PC-3 (cell line): ENCODE measurements at regions of chr13 and their contacts with region 1.

Region 1: DNA sequence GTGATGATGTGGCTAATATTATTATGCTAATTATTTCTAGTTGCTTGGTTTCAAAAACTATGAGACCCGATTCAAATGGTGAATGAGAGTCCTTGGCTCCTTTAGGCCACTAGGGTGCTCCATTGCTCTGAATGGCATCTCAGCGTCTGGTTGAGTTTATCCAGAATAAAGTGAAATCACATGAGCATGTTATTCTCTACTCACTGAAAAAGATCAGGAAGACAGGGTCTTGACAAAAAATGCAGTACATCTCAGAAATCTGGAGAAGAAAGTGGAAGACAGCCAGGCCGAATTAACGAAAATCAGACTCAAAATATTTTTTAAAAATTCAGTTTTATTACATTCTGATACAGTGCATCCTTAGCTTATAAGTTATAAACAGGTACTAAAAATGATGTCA is 516.2 kb downstream of the MYO16 start:
- DNase-seq: peak; percentile 74
- ATAC-seq: peak; percentile 73
- H3K4me3 ChIP-seq: no peak overlapping the region
- H3K27ac ChIP-seq: 0 out of 2 replicates have a peak overlapping the region, but pooled peaks have one; percentile 6
- H3K4me1 ChIP-seq: peaks cover 39% of the 10 kb centered on the region
- H3K27me3 ChIP-seq: no peaks in the 10 kb centered on the region
- CTCF ChIP-seq: peak; percentile 87

Region 2: GRCh38 chr13:108961542-108962125 is 184.0 kb before region 1 on chr13:
- CTCF ChIA-PET with region 1: interaction called, 4 read pairs
- POLR2A ChIA-PET with region 1: no interaction called
- intact Hi-C with region 1: loop called (anchors 5 kb)
- DNase-seq: peak; percentile 67
- ATAC-seq: peak; percentile 48
- H3K4me3 ChIP-seq: no peak overlapping the region
- H3K27ac ChIP-seq: no peak overlapping the region
- H3K4me1 ChIP-seq: 0 out of 2 replicates have a peak, but pooled peaks cover 6% of the 10 kb centered on the region
- H3K27me3 ChIP-seq: no peaks in the 10 kb centered on the region
- CTCF ChIP-seq: peak; percentile 83

Region 3: GRCh38 chr13:109275852-109276251 is 130.2 kb after region 1 on chr13:
- CTCF ChIA-PET with region 1: no interaction called
- POLR2A ChIA-PET with region 1: no interaction called
- intact Hi-C with region 1: loop called (anchors 5 kb)
- DNase-seq: no peak
- ATAC-seq: 0 out of 2 replicates have a peak, but pooled peaks have one; percentile 6
- H3K4me3 ChIP-seq: no peak overlapping the region
- H3K27ac ChIP-seq: no peak overlapping the region
- H3K4me1 ChIP-seq: peaks cover 34% of the 10 kb centered on the region
- H3K27me3 ChIP-seq: no peaks in the 10 kb centered on the region
- CTCF ChIP-seq: peak; percentile 35; the same call in 1 of the 2 replicates

Region 4: DNA sequence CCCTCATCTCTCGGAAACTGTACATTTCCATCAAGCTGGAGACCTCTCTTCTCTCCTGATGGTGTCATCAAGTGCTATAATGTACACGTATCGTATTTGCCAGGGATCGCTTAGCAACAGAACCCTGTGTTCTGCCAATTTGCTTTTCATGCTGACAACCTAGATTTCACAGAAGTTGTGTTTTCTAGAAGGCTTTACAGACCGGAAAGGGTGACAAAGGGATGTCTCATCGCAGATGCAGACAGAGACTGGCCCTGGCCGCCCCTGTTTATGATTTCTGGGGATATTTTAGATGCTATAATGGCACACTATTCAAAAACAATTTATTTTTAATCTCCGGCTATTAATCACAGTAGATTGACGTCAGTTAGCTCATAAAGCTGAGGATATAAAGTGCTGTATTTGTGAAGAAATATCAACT is 349.3 kb after region 1 on chr13:
- CTCF ChIA-PET with region 1: no interaction called
- POLR2A ChIA-PET with region 1: no interaction called
- intact Hi-C with region 1: loop called (anchors 5 kb)
- DNase-seq: peak; percentile 74
- ATAC-seq: peak; percentile 86
- H3K4me3 ChIP-seq: peak overlapping the region; percentile 48
- H3K27ac ChIP-seq: peak overlapping the region; percentile 89
- H3K4me1 ChIP-seq: peaks cover 38% of the 10 kb centered on the region
- H3K27me3 ChIP-seq: no peaks in the 10 kb centered on the region
- CTCF ChIP-seq: no peak

Region 5: GRCh38 chr13:109720758-109721184 is 575.1 kb after region 1 on chr13:
- CTCF ChIA-PET with region 1: no interaction called
- POLR2A ChIA-PET with region 1: no interaction called
- intact Hi-C with region 1: no loop called
- DNase-seq: no peak
- ATAC-seq: no peak
- H3K4me3 ChIP-seq: no peak overlapping the region
- H3K27ac ChIP-seq: no peak overlapping the region
- H3K4me1 ChIP-seq: no peaks in the 10 kb centered on the region
- H3K27me3 ChIP-seq: no peaks in the 10 kb centered on the region
- CTCF ChIP-seq: no peak

Region 6: DNA sequence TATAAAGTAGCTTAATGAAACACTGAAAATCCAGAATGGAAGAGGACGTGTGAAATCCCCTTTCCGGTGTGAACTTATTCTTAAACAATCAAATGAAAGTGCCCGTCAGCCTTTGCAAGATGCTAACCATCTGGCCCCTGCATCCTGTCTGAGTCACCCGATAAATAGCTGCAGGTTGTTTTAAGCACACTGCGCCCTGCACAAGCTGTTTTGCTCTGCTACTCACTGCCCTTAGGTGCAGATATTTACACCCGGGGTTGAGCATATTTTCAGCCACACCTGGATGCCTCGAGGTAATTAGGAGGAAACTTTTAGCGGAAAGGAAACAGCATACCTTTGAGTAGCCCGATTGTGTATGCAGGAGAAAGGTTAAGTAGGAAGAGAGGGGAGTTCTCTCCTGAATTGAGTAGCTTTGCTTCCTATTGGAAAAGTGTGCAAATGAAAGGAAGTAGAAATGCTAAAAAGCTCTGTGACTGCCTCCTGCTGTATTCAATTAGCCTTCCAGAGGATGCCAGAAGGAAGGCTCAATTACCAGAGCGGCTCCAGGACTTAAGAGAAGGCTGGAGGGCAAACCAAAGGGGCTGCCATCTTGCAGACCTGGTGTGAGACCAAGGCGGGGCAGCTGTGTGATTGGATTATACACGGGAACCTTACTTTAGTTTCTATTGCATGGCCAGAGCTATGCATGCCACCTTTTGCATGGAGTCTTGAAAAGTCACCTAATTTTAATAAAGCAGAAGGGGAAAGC is 598.2 kb after region 1 on chr13:
- CTCF ChIA-PET with region 1: no interaction called
- POLR2A ChIA-PET with region 1: no interaction called
- intact Hi-C with region 1: loop called (anchors 5 kb)
- DNase-seq: peak; percentile 87
- ATAC-seq: peak; percentile 94
- H3K4me3 ChIP-seq: peak overlapping the region; percentile 25; the same call in 1 of the 2 replicates
- H3K27ac ChIP-seq: peak overlapping the region; percentile 47
- H3K4me1 ChIP-seq: peaks cover 21% of the 10 kb centered on the region
- H3K27me3 ChIP-seq: no peaks in the 10 kb centered on the region
- CTCF ChIP-seq: no peak

Region 7: DNA sequence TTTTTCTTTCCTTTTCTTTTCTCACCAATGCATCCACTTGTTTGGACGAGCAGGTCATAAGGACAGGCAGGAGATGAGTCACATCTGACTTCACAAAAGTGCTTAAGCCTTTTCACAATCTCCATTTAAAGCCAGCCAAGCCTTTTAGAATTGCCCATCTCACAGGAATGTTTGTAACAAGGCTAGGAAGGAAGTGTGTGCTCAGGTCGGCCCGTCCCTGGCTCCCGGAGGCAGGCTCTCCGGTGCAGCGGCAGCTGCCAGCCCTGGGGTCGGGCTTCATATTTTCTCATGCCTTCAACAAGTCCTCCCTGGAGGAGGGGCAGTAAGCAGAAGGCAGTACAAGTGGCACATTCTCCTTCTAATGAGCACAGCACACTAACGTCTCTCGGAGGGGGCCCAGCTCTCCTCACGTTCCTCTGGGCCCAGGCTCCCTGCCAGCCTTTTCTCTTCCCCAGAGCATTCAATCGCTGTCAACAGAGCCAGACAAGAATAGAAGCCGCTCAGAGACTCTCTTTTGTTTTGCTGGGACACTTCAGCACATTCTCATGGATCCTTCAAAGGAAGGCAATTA is 980.8 kb after region 1 on chr13:
- CTCF ChIA-PET with region 1: no interaction called
- POLR2A ChIA-PET with region 1: no interaction called
- intact Hi-C with region 1: loop called (anchors 5 kb)
- DNase-seq: peak; percentile 89
- ATAC-seq: peak; percentile 95
- H3K4me3 ChIP-seq: peak overlapping the region; percentile 5; the same call in 1 of the 2 replicates
- H3K27ac ChIP-seq: peak overlapping the region; percentile 91
- H3K4me1 ChIP-seq: peaks cover 35% of the 10 kb centered on the region
- H3K27me3 ChIP-seq: no peaks in the 10 kb centered on the region
- CTCF ChIP-seq: no peak